ENCODE measurements at regions of chr1 and their contacts with region 1.

Region 1: GRCh38 chr1:1665800-1666251 is 7.0 kb upstream of the CDK11B start:
- DNase-seq: peak in 1 of 2 donors; percentile 22
- ATAC-seq: no peak

Region 2: GRCh38 chr1:1730870-1731269 is 65.0 kb after region 1 on chr1:
- intact Hi-C with region 1: loop called in 1 of 2 experiments (anchors 5 kb)
- DNase-seq: no peak
- ATAC-seq: no peak

Measured in left colon (tissue), 2 donors.